ENCODE measurements at regions of chr1 and their contacts with region 1.

Region 1: DNA sequence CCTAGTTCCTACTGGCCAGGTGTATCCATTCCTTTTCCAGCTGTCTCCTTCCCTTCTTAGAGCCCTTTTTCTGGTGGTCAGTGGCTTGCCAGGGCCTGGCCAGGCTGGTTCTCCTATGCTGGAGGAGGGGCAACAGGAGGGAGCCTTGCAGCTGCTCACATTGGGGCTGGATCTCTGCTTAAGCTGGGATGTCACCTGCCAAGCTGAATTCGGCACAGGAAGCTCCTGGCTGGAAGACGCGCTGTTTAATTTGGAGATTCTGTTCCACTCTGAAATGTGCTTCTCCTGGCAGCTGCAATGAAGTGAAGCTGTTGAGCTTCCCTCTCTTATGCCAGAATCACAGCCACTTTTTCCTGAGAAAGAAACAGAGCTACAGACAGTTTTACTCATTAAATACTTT is 56.0 kb upstream of the POU3F1 start:
- DNase-seq: no peak
- H3K4me3 ChIP-seq: no peak overlapping the region
- H3K27ac ChIP-seq: no peak overlapping the region
- H3K4me1 ChIP-seq: peaks cover 0 to 3% (median 1%) of the 10 kb centered on the region in 4 experiments; a peak in 4 of 7 replicates
- H3K27me3 ChIP-seq: no peaks in the 10 kb centered on the region
- CTCF ChIP-seq: no peak
- EP300 ChIP-seq: no peak
- POLR2A ChIP-seq: no peak
- RAD21 ChIP-seq: no peak

Region 2: GRCh38 chr1:37776946-37777516 is 325.6 kb before region 1 on chr1:
- CTCF ChIA-PET with region 1: no interaction called
- POLR2A ChIA-PET with region 1: no interaction called
- DNase-seq: no peak
- H3K4me3 ChIP-seq: no peak overlapping the region
- H3K27ac ChIP-seq: no peak overlapping the region
- H3K4me1 ChIP-seq: no peaks in the 10 kb centered on the region
- H3K27me3 ChIP-seq: no peaks in the 10 kb centered on the region; a peak in 1 of 7 replicates
- CTCF ChIP-seq: no peak
- EP300 ChIP-seq: no peak
- POLR2A ChIP-seq: no peak
- RAD21 ChIP-seq: no peak

Region 3: DNA sequence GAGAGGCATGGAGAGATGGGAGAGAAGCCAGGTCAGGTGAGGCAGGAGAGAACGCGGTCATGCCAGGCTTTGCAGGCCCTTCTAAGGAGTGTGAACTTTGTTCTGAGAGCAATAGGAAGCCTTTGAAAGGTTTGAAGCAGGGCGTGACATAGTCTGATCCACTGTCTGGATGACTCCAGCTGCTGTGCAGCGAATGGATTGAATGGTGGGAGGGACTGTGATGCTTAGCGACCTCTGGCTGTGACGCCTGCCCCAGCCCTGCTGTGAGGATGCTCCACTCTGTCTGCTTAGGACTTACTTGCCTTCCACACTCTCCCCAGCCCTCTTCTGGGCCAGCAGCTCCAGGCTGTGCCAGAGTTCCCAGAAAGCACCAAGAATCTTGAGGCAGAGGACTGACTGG is 14.3 kb before region 1 on chr1:
- CTCF ChIA-PET with region 1: interaction called, 10 read pairs
- POLR2A ChIA-PET with region 1: interaction called, 3 read pairs
- DNase-seq: no peak
- H3K4me3 ChIP-seq: no peak overlapping the region
- H3K27ac ChIP-seq: no peak overlapping the region
- H3K4me1 ChIP-seq: peaks cover 8 to 29% (median 19%) of the 10 kb centered on the region in 4 experiments
- H3K27me3 ChIP-seq: no peaks in the 10 kb centered on the region; a peak in 1 of 7 replicates
- CTCF ChIP-seq: no peak
- EP300 ChIP-seq: no peak
- POLR2A ChIP-seq: no peak
- RAD21 ChIP-seq: no peak